ENCODE measurements at regions of chr1 and their contacts with region 1.

Region 1: GRCh38 chr1:188194916-188195315 is 1366.2 kb downstream of the PLA2G4A start:
- DNase-seq: no peak
- ATAC-seq: no peak
- H3K4me3 ChIP-seq: no peak overlapping the region
- H3K27ac ChIP-seq: no peak overlapping the region
- H3K4me1 ChIP-seq: no peaks in the 10 kb centered on the region
- H3K27me3 ChIP-seq: no peaks in the 10 kb centered on the region
- CTCF ChIP-seq: no peak
- POLR2A ChIP-seq: no peak

Region 2: GRCh38 chr1:188251039-188251438 is 56.1 kb after region 1 on chr1:
- intact Hi-C with region 1: no loop called
- DNase-seq: no peak
- ATAC-seq: no peak
- H3K4me3 ChIP-seq: no peak overlapping the region
- H3K27ac ChIP-seq: no peak overlapping the region
- H3K4me1 ChIP-seq: no peaks in the 10 kb centered on the region
- H3K27me3 ChIP-seq: no peaks in the 10 kb centered on the region
- CTCF ChIP-seq: no peak
- POLR2A ChIP-seq: no peak

Region 3: DNA sequence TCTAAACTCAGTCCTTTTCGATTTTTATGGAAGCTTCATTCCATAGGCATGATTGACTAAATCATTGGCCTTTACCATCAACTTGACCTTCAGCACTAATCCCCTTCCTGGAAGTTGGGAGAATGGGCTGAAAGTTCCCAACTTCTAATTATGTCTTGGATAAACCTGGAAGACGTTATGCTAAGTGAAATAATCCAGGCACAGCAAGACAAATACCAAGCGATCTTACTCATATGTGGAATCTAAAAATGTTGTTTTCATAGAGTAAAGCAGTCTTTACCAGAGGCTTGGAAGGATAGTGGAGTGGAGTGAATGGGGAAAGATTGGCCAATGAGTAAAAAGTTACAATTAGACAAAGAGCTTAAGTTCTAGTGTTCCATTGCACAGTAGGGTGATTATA is 87.0 kb after region 1 on chr1:
- intact Hi-C with region 1: no loop called
- DNase-seq: no peak
- ATAC-seq: no peak
- H3K4me3 ChIP-seq: no peak overlapping the region
- H3K27ac ChIP-seq: no peak overlapping the region
- H3K4me1 ChIP-seq: no peaks in the 10 kb centered on the region
- H3K27me3 ChIP-seq: no peaks in the 10 kb centered on the region
- CTCF ChIP-seq: no peak
- POLR2A ChIP-seq: no peak

Region 4: GRCh38 chr1:188302746-188303145 is 107.8 kb after region 1 on chr1:
- intact Hi-C with region 1: loop called in 1 of 10 experiments (anchors 10 kb)
- DNase-seq: no peak
- ATAC-seq: no peak
- H3K4me3 ChIP-seq: no peak overlapping the region
- H3K27ac ChIP-seq: no peak overlapping the region
- H3K4me1 ChIP-seq: no peaks in the 10 kb centered on the region
- H3K27me3 ChIP-seq: no peaks in the 10 kb centered on the region
- CTCF ChIP-seq: no peak
- POLR2A ChIP-seq: no peak